B cell (primary cell): ENCODE measurements at regions of chr20 and their contacts with region 1.

Region 1: DNA sequence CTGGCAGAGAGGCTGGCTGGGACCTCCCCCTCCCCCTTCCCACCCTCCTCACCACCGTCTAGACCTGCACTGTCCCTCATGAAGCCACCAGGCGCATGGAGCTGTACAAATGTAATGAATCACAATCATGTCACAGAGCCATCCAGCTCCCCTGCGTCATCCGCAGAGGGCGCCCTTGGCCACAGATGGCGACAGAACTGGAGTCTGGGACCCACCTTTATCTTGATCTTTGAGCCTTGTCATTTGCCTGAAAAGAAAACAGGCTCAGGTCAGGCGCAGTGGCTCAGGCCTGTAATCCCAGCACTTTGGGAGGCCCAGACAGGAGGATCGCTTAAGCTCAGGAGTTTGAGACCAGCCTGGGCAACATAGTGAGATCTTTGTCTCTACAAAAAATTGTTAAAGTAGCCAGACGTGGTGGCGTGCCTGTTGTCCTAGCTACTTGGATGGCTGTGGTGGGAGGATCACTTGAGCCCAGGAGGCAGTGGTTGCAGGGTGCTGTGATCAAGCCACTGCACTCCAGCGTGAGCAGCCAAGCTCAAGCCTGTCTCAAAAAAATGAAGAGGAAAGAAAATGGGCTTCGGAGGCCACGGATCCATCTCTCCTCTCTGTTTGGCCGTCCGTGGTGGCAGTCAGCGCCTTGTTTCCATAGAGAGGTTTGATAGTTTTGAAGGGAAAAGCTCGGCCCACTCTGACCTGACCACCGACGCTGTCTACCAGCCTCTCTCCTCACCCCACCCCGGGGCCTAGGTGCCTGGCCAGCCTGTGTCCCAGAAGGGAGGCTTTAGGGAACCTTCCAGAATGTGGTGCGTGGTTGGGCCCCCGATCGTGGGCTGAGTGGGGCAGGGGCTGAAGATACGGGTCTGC is 6.2 kb downstream of the COL9A3 start:
- DNase-seq: peak; percentile 59
- ATAC-seq: peak; percentile 15
- H3K4me3 ChIP-seq: no peak overlapping the region
- H3K4me3 Mint-ChIP-seq: peak overlapping the region; percentile 56
- H3K27ac ChIP-seq: no peak overlapping the region
- H3K27ac Mint-ChIP-seq: peak overlapping the region; percentile 56
- H3K4me1 ChIP-seq: peaks cover 23 to 28% of the 10 kb centered on the region in 2 donors
- H3K4me1 Mint-ChIP-seq: peaks cover 16% of the 10 kb centered on the region
- H3K27me3 ChIP-seq: peaks cover 0 to 24% (median 14%) of the 10 kb centered on the region in 4 experiments
- H3K27me3 Mint-ChIP-seq: no peaks in the 10 kb centered on the region
- CTCF ChIP-seq: peak; percentile 49

Region 2: DNA sequence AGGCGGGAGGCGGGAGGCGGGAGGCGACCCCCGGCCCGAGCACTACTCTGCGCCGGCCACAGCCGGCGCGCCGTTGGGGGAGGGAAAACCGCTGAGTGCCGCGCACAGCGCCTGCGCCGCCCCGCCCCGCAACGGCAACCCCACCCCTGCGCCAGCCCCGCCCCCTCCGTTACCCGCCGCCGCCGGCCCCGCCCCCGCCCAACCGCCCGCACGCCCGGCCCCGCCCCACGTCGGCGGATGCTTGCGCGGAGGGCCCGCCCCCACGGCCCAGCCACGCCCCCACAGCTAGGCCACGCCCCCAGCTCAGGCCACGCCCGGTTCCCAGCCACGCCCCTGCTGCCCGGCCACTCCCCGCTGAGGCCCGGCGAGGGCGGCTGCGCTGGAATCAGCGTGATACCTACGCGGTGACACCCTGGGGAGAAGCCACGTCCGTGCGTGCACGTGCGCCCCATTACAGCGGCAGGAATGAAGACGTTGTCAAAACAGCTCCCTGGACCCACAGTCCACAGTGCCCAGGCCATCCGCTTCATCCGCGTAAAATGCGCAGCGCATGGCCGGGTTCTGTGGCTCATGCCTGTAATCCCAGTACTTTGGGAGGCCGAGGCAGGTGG is 38.8 kb after region 1 on chr20 and contains the start of gene TCFL5:
- CTCF ChIA-PET with region 1: interaction called, 6 read pairs
- POLR2A ChIA-PET with region 1: interaction called, 3 read pairs
- intact Hi-C with region 1: loop called (anchors 2 kb)
- DNase-seq: peak; percentile 95
- ATAC-seq: peak; percentile 92
- H3K4me3 ChIP-seq: peak within 1 kb of the TSS in 3 of 5 experiments; percentile 33 to 47 (median 36)
- H3K4me3 Mint-ChIP-seq: peak within 1 kb of the TSS; percentile 81
- H3K27ac ChIP-seq: no peak within 1 kb of the TSS
- H3K27ac Mint-ChIP-seq: peak within 1 kb of the TSS; percentile 42
- H3K4me1 ChIP-seq: peaks cover 9 to 27% of the 10 kb centered on the region in 2 donors
- H3K4me1 Mint-ChIP-seq: peaks cover 20% of the 10 kb centered on the region
- H3K27me3 ChIP-seq: peaks cover 0 to 9% (median 6%) of the 10 kb centered on the region in 4 experiments
- H3K27me3 Mint-ChIP-seq: no peaks in the 10 kb centered on the region
- CTCF ChIP-seq: no peak
- total RNA-seq, gene TCFL5: 15.7 and 16.2 TPM in 2 replicates

Region 3: GRCh38 chr20:63708301-63709148 is 885.5 kb after region 1 on chr20:
- CTCF ChIA-PET with region 1: no interaction called
- POLR2A ChIA-PET with region 1: no interaction called
- intact Hi-C with region 1: no loop called
- DNase-seq: no peak
- ATAC-seq: peak; percentile 1
- H3K4me3 ChIP-seq: peak overlapping the region in 4 of 5 experiments; percentile 53 to 80 (median 67)
- H3K4me3 Mint-ChIP-seq: peak overlapping the region; percentile 76
- H3K27ac ChIP-seq: peak overlapping the region; percentile 27 to 85
- H3K27ac Mint-ChIP-seq: peak overlapping the region; percentile 56
- H3K4me1 ChIP-seq: peaks cover 21 to 28% of the 10 kb centered on the region in 2 donors
- H3K4me1 Mint-ChIP-seq: peaks cover 38% of the 10 kb centered on the region
- H3K27me3 ChIP-seq: no peaks in the 10 kb centered on the region
- H3K27me3 Mint-ChIP-seq: no peaks in the 10 kb centered on the region
- CTCF ChIP-seq: no peak